ENCODE measurements at regions of chr3 and their contacts with region 1.

Region 1: DNA sequence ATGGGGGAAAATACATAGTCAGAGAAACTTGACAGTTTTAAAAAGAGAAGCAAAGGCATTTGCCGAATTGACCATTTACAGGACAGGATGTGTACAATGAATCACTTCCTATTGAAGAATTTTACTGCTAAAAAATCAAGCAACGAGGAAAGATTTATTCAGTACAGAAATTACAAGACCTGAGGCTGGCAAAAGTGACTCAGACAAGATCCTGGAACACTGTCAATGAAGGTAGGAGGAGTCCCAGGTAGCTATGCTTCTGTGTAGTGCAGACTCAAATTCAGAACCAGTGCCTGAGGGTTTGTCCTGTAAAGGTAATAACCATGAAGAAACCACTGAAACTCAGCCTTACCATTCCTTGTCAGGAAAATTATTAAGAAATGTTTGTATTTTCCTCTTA is 120.9 kb downstream of the ZMAT3 start:
- DNase-seq: no peak
- H3K4me3 ChIP-seq: no peak overlapping the region
- H3K27ac ChIP-seq: no peak overlapping the region
- H3K4me1 ChIP-seq: no peaks in the 10 kb centered on the region
- H3K27me3 ChIP-seq: no peaks in the 10 kb centered on the region
- CTCF ChIP-seq: no peak
- POLR2A ChIP-seq: no peak

Region 2: DNA sequence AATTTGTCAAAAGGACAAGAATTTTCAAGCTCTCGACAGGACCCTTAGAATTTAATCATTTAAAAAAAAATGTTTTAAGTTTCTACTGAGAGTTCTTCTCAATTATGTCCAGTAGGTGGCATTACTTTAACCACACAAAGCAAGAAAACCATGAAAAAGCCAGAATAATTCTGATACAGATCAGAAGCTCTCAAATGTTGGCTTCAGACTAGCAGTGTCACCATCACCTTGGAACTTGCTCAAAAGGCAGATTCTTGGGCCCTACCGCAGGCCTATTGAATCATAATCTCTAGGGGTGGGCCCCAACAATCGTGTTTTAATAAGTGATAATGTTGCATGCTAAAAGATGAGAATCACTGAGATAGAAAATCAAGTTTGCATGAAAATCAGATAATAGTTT is 513.9 kb before region 1 on chr3:
- intact Hi-C with region 1: loop called (anchors 10 kb)
- DNase-seq: no peak
- H3K4me3 ChIP-seq: no peak overlapping the region
- H3K27ac ChIP-seq: no peak overlapping the region
- H3K4me1 ChIP-seq: no peaks in the 10 kb centered on the region
- H3K27me3 ChIP-seq: no peaks in the 10 kb centered on the region
- CTCF ChIP-seq: peak in 6 of 11 experiments; percentile 21 to 52 (median 42)
- POLR2A ChIP-seq: no peak

Region 3: DNA sequence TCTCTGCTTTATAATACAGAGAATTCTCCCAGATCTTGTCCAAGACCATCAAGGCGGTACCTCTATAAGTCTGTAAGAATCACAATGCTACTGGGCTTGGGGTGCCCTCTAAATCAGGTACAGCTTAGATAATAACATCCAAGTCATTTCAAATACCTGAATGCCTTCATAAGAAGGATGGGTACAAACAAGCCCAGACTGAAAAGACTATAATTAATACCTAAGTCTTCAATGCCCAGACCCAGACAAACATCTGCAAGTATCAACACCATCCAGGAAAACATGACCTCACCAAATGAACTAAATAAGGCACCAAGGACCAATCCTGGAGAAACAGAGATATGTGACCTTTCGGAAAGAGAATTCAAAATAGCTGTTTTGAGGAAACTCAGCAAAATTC is 55.0 kb after region 1 on chr3:
- intact Hi-C with region 1: no loop called
- DNase-seq: no peak
- H3K4me3 ChIP-seq: no peak overlapping the region
- H3K27ac ChIP-seq: no peak overlapping the region
- H3K4me1 ChIP-seq: no peaks in the 10 kb centered on the region
- H3K27me3 ChIP-seq: no peaks in the 10 kb centered on the region
- CTCF ChIP-seq: no peak
- POLR2A ChIP-seq: no peak

Measured in spleen (tissue), 13 donors.